ENCODE measurements at regions of chr5 and their contacts with region 1.

Region 1: DNA sequence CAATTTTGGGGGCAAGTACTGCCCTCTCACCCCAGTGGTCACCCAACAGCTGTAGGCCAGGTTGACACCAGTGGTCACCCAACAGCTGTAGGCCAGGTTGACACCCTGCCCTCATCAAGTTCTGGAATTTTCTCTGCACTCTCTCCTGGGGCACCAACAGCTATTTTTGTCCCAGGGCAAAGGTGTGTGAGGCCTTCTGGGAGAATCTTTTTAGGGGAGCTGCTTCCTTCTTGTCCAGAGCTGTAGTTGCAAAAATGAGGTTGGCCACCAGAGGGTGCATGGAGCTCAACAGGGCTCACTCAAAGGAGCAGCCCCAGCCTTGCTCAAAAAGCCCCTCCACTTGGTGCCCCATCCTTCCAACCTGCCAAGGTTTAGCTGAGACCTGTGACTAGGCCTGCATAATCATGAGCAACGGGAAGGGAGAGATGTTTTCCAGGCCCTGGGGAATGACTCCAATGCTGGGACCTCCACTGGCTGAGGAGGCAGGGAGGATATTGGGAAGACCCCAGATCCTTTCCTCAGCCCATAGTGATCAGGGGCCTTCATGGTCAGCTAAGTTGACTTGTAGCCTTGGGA is 10.6 kb upstream of the P4HA2 start:
- DNase-seq: no peak

Region 2: GRCh38 chr5:132272311-132273210 is 34.3 kb after region 1 on chr5:
- intact Hi-C with region 1: loop called (anchors 1 kb)
- DNase-seq: no peak

Region 3: GRCh38 chr5:132378580-132378979 is 140.3 kb after region 1 on chr5:
- intact Hi-C with region 1: loop called (anchors 5 kb)
- DNase-seq: no peak

Measured in cardiac septum (tissue), 1 donor.